ENCODE measurements at regions of chr4 and their contacts with region 1.

Region 1: DNA sequence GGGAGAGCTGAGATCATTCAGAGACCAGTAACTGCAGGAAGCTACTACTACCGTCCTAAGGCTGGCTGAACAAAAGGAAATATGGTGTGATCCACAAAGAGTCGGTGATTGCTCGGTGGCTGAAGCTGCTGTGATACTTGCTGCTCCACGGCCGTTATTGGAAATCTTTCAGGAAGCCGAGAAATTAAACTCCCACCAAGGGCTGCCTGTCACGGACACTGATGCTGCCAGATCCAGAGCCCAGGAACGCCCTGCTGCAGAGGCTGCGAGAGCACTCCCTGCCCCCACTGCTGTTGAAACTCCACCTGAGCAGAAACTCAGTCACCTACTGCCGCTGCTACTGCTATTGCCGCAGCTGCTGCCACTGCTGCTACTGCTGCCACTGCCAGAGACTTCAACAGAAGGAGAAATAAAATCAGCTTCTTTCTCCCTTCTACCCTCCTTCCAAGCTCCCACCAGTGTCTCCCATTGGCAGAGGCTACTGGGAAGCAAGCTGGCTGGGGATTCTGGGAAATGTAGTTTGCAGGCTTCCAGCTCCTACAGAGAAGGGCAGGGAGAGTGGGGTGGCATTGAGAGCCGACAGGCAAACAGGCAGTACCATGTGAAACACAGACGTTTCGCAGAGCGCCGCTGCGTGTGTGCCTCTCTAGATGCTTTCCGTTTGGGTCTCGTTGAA is 126.0 kb upstream of the ENPP6 start:
- DNase-seq: peak; percentile 65
- H3K4me3 Mint-ChIP-seq: peak overlapping the region; percentile 67
- H3K27ac Mint-ChIP-seq: peak overlapping the region; percentile 45
- H3K4me1 Mint-ChIP-seq: peaks cover 59% of the 10 kb centered on the region
- H3K27me3 Mint-ChIP-seq: no peaks in the 10 kb centered on the region
- CTCF ChIP-seq: no peak

Region 2: DNA sequence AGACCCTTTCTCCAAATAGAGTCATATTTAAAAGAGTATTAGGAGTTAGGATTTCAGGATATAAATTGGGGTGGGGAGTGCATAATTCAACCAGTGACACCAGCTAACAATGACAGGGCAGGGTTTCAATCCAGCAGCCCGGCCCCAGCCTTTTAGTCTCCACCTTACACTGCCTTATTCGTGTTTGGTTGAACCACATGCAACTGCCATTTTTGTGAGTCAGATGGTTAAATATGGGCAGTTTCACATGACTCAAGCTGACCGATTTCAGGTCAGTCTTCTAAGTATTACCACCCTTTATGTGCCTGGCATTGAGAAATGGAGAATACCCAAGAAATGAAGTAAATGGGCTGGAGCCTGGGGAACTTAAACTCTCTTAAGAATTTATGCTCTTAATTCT is 335.7 kb before region 1 on chr4:
- CTCF ChIA-PET with region 1: no interaction called
- intact Hi-C with region 1: no loop called
- DNase-seq: no peak
- H3K4me3 Mint-ChIP-seq: no peak overlapping the region
- H3K27ac Mint-ChIP-seq: no peak overlapping the region
- H3K4me1 Mint-ChIP-seq: no peaks in the 10 kb centered on the region
- H3K27me3 Mint-ChIP-seq: no peaks in the 10 kb centered on the region
- CTCF ChIP-seq: no peak

Region 3: DNA sequence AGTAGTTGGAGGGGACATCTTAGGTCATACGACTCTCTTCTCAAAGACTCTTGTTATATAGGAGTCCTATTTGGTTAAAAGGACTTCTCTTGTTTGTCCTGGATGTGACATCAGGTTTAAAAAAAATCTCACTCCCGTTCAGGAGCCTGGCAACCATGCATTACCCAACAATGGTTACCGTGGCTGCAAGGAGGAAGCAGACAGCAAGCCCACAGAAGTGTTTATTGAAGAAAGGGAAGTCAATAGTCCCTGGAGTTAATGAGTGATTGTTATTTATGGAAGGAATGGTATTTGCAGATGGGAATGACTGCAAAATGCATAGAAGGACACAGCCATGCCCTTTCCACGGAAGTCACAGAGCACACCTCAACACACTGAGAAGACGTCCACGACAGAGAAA is 50.1 kb before region 1 on chr4:
- CTCF ChIA-PET with region 1: interaction called, 6 read pairs
- intact Hi-C with region 1: loop called (anchors 2 kb)
- DNase-seq: peak; percentile 54
- H3K4me3 Mint-ChIP-seq: no peak overlapping the region
- H3K27ac Mint-ChIP-seq: no peak overlapping the region
- H3K4me1 Mint-ChIP-seq: peaks cover 15% of the 10 kb centered on the region
- H3K27me3 Mint-ChIP-seq: no peaks in the 10 kb centered on the region
- CTCF ChIP-seq: no peak

Region 4: GRCh38 chr4:184838249-184839074 is 494.8 kb after region 1 on chr4:
- CTCF ChIA-PET with region 1: no interaction called
- intact Hi-C with region 1: no loop called
- DNase-seq: no peak
- H3K4me3 Mint-ChIP-seq: no peak overlapping the region
- H3K27ac Mint-ChIP-seq: no peak overlapping the region
- H3K4me1 Mint-ChIP-seq: peaks cover 10% of the 10 kb centered on the region
- H3K27me3 Mint-ChIP-seq: no peaks in the 10 kb centered on the region
- CTCF ChIP-seq: no peak